ENCODE measurements at regions of chr15 and their contacts with region 1.

Region 1: GRCh38 chr15:78437762-78438302 is at the start of gene IREB2:
- DNase-seq: peak; percentile 95
- ATAC-seq: peak; percentile 91
- H3K4me3 Mint-ChIP-seq: peak within 1 kb of the TSS; percentile 98
- H3K27ac Mint-ChIP-seq: peak within 1 kb of the TSS; percentile 97
- H3K4me1 Mint-ChIP-seq: peaks cover 41% of the 10 kb centered on the region
- H3K27me3 Mint-ChIP-seq: peaks cover 1% of the 10 kb centered on the region
- CTCF ChIP-seq: no peak
- total RNA-seq, gene IREB2: 69.9 and 75.9 TPM in 2 replicates

Region 2: DNA sequence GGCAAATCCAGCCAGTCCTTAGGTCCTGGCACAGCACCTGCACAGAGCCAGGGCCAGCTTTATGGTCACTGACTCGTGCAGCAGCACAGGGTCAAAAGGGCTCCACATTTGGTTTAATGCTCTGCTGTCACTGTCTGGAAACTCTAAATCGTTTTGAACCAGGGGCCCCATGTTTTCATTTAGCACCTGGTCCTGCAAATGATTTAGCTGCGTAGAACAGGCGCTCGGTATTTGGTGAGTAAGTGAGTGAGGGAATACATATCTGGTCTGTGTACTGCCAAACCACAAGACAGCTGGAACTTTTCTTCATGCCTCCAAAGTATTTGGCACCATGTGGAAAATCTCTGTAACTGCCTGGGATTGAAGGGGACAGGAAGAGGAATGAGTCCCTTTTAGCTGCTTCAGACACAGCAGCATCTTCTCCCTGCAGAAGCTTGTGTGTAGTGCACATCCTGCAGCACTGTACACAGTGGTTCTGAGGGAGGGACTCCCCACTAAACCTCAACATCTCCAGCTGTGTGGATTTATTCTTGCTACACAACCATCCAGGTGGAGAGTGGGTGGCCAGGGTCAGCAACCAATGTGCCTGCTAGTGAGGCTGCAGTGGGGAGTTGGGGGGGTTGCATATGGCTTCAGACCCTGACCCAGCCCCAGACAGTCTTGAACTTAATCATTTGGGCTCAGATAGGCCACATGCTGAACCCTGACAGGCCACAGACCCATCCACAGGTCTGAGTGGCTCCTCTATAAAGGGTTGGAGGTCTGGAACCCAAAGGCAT is 344.4 kb before region 1 on chr15:
- CTCF ChIA-PET with region 1: no interaction called
- POLR2A ChIA-PET with region 1: no interaction called
- intact Hi-C with region 1: no loop called
- DNase-seq: no peak
- ATAC-seq: no peak
- H3K4me3 Mint-ChIP-seq: no peak overlapping the region
- H3K27ac Mint-ChIP-seq: no peak overlapping the region
- H3K4me1 Mint-ChIP-seq: peaks cover 5% of the 10 kb centered on the region
- H3K27me3 Mint-ChIP-seq: peaks cover 5% of the 10 kb centered on the region
- CTCF ChIP-seq: no peak

Region 3: DNA sequence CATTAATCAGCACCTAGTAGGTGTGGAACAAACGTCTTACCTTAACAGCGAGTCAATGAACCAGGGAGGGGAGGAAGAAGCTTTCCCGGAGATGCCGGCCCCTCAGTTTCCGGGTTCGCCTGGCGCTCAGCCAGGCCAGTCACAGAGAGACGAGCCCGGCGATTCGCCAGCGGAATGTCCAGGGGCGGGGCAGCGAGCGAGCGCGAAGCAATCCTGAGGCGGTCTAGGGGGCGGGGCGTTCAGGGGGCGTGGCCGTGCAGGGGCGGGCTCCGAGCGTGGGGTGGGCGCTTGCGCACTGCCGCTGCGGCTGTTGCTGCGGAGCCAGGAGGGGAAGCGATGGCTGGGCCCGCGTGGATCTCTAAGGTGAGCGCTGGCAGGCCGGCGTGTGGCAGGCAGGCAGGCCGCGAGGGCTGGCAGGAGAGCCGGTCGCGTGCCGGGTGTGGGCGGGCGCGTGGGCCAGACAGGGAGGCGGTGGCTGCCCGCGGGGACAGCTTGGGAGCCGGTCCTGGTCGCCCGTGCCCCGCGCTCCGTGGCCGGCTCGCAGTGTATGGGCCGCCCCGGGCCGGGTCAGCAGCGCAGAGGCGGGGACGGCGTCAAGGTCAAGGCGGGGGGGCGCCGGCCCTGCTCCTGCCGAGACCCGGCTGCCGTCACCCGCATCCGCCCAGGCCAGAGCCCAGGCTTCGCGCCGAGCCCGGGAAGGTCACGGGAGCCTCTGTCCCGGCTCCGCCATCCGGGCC is 288.6 kb before region 1 on chr15 and contains the start of gene IDH3A:
- CTCF ChIA-PET with region 1: no interaction called
- POLR2A ChIA-PET with region 1: interaction called, 12 read pairs
- intact Hi-C with region 1: loop called (anchors 1 kb)
- DNase-seq: peak; percentile 99
- ATAC-seq: peak; percentile 97
- H3K4me3 Mint-ChIP-seq: peak within 1 kb of the TSS; percentile 94
- H3K27ac Mint-ChIP-seq: peak within 1 kb of the TSS; percentile 91
- H3K4me1 Mint-ChIP-seq: peaks cover 46% of the 10 kb centered on the region
- H3K27me3 Mint-ChIP-seq: no peaks in the 10 kb centered on the region
- CTCF ChIP-seq: no peak
- total RNA-seq, gene IDH3A: 111 and 124 TPM in 2 replicates

Region 4: GRCh38 chr15:78299101-78299930 is 138.5 kb before region 1 on chr15 and contains the start of gene SKIC8:
- CTCF ChIA-PET with region 1: no interaction called
- POLR2A ChIA-PET with region 1: interaction called, 30 read pairs
- intact Hi-C with region 1: loop called (anchors 1 kb)
- DNase-seq: peak; percentile 89
- ATAC-seq: peak; percentile 97
- H3K4me3 Mint-ChIP-seq: peak within 1 kb of the TSS; percentile 98
- H3K27ac Mint-ChIP-seq: peak within 1 kb of the TSS; percentile 87
- H3K4me1 Mint-ChIP-seq: peaks cover 23% of the 10 kb centered on the region
- H3K27me3 Mint-ChIP-seq: no peaks in the 10 kb centered on the region
- CTCF ChIP-seq: no peak
- total RNA-seq, gene SKIC8: 43.2 and 46.0 TPM in 2 replicates

Region 5: DNA sequence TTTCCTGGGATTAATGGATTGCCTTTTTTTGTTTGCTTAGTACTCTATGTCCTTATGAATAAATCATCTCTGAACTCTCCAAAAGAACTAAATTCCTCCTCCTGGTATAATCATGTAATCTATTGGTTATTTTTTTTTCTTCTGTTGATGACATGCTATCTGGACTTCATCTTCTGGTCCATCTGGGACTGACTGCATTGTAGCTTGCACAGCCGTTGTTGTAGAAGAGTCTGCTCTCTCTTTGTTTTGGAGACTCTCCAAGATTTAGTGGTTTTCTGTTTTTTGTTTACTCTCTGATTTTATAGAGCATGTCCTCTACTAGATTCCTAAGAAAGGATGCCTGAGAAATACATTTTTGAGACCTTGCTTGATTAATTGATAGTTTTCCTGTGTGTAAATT is 19.3 kb after region 1 on chr15:
- CTCF ChIA-PET with region 1: no interaction called
- POLR2A ChIA-PET with region 1: interaction called, 6 read pairs
- intact Hi-C with region 1: loop called (anchors 2 kb)
- DNase-seq: no peak
- ATAC-seq: no peak
- H3K4me3 Mint-ChIP-seq: no peak overlapping the region
- H3K27ac Mint-ChIP-seq: no peak overlapping the region
- H3K4me1 Mint-ChIP-seq: peaks cover 72% of the 10 kb centered on the region
- H3K27me3 Mint-ChIP-seq: no peaks in the 10 kb centered on the region
- CTCF ChIP-seq: no peak

Region 6: GRCh38 chr15:78540141-78540928 is 102.5 kb after region 1 on chr15 and contains the start of gene PSMA4:
- CTCF ChIA-PET with region 1: no interaction called
- POLR2A ChIA-PET with region 1: interaction called, 50 read pairs
- intact Hi-C with region 1: loop called (anchors 1 kb)
- DNase-seq: peak; percentile 97
- ATAC-seq: peak; percentile 87
- H3K4me3 Mint-ChIP-seq: peak within 1 kb of the TSS; percentile 98
- H3K27ac Mint-ChIP-seq: peak within 1 kb of the TSS; percentile 99
- H3K4me1 Mint-ChIP-seq: peaks cover 24% of the 10 kb centered on the region
- H3K27me3 Mint-ChIP-seq: no peaks in the 10 kb centered on the region
- CTCF ChIP-seq: no peak
- total RNA-seq, gene PSMA4: 178 and 182 TPM in 2 replicates

Region 7: DNA sequence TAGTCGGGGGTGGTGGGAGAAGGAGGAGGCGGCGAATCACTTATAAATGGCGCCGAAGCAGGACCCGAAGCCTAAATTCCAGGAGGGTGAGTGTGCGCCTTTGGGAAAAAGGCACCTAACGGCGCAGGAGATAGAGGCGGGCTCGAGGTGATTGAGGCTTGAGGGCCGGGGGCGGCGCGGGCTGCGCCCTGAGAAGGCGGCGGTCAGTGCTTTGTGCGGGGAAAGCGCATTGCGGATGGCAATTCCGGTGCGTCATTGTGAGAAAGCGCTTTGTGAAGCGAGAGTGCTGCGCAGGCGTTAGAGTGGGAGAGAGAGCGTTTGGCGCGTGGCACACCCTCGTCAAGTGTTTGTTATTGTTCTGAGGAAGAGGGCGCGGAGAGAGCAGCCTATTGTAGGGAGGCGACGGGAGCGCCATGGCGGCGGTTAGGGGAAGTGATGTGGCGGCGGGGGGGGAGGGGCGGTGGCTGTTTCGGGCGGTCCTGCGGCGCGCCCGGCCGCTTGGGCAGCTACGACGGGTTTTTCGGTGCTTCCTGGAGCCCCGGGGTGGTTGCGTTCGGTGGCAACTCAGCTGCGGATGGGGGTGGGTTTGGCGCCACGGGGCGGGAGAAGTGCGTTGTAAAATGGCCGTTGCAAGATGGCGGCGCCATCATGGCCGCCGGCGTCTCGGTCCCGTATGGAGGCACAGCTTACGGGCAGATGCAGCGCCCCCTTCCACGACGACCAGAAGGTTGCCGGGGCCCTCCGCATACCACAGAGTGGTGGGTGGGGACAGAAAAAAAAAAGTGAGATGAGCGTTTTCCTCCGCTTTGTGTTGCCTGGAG is 435.4 kb after region 1 on chr15:
- CTCF ChIA-PET with region 1: no interaction called
- POLR2A ChIA-PET with region 1: interaction called, 6 read pairs
- intact Hi-C with region 1: loop called (anchors 2 kb)
- DNase-seq: peak; percentile 81
- ATAC-seq: peak; percentile 72
- H3K4me3 Mint-ChIP-seq: peak overlapping the region; percentile 98
- H3K27ac Mint-ChIP-seq: peak overlapping the region; percentile 100
- H3K4me1 Mint-ChIP-seq: peaks cover 39% of the 10 kb centered on the region
- H3K27me3 Mint-ChIP-seq: no peaks in the 10 kb centered on the region
- CTCF ChIP-seq: no peak

Measured in activated B cell treated with CpG ODN at 0.5 μM for 24 hours (primary cell).